ENCODE measurements at regions of chr17 and their contacts with region 1.

Region 1: GRCh38 chr17:41695954-41696756 is 7.5 kb downstream of the EIF1 start:
- DNase-seq: no peak
- ATAC-seq: peak; percentile 75
- H3K4me3 Mint-ChIP-seq: no peak overlapping the region
- H3K27ac Mint-ChIP-seq: peak overlapping the region; percentile 65
- H3K4me1 Mint-ChIP-seq: peaks cover 26% of the 10 kb centered on the region
- H3K27me3 Mint-ChIP-seq: no peaks in the 10 kb centered on the region
- CTCF ChIP-seq: peak; percentile 57

Region 2: DNA sequence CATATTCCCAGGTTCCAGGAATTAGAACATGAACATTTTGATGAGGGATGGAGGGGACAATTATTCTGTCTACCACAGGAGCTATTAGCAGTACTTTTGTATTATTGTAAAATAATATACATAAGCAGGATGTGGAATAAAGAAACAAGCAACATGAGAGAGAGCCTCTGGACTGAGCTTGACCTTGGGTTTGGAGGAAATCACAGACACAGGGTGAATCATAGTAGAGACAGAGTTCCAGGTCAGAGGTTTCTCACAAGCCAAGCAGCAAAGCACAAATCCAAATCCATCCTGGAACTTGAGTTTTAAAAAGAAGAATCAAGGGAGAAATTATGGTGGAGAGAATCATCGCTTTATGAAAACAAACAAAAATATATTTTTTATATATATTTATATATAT is 303.9 kb before region 1 on chr17:
- CTCF ChIA-PET with region 1: no interaction called
- POLR2A ChIA-PET with region 1: no interaction called
- intact Hi-C with region 1: no loop called
- DNase-seq: no peak
- ATAC-seq: no peak
- H3K4me3 Mint-ChIP-seq: no peak overlapping the region
- H3K27ac Mint-ChIP-seq: no peak overlapping the region
- H3K4me1 Mint-ChIP-seq: no peaks in the 10 kb centered on the region
- H3K27me3 Mint-ChIP-seq: peaks cover 52% of the 10 kb centered on the region
- CTCF ChIP-seq: no peak

Region 3: GRCh38 chr17:41464682-41465081 is 231.5 kb before region 1 on chr17:
- CTCF ChIA-PET with region 1: no interaction called
- POLR2A ChIA-PET with region 1: no interaction called
- intact Hi-C with region 1: no loop called
- DNase-seq: no peak
- ATAC-seq: no peak
- H3K4me3 Mint-ChIP-seq: no peak overlapping the region
- H3K27ac Mint-ChIP-seq: no peak overlapping the region
- H3K4me1 Mint-ChIP-seq: no peaks in the 10 kb centered on the region
- H3K27me3 Mint-ChIP-seq: peaks cover 28% of the 10 kb centered on the region
- CTCF ChIP-seq: no peak

Region 4: DNA sequence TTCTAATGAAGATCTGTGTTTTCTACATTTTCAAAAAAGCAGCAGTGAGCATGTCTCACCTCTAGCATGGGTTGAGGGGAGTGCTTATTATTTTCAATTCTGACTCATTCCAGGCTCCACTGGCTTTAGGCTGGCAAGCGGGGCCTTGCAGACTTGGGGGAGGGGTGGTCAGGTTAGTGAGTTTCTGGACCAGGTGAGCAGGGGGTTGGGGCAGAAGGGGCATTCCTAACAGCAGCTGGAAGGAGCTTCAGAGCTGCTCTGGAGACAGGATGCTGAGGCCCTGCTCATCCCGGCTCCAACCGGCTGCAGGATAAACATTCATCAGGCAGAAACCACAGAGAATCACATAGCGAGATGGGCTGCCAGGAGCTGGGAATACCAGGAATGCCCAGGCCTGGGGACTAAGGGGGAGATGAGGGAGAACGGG is 157.6 kb before region 1 on chr17:
- CTCF ChIA-PET with region 1: no interaction called
- POLR2A ChIA-PET with region 1: no interaction called
- intact Hi-C with region 1: no loop called
- DNase-seq: no peak
- ATAC-seq: no peak
- H3K4me3 Mint-ChIP-seq: no peak overlapping the region
- H3K27ac Mint-ChIP-seq: no peak overlapping the region
- H3K4me1 Mint-ChIP-seq: no peaks in the 10 kb centered on the region
- H3K27me3 Mint-ChIP-seq: peaks cover 38% of the 10 kb centered on the region
- CTCF ChIP-seq: no peak

Region 5: GRCh38 chr17:41678907-41679739 is 17.0 kb before region 1 on chr17:
- CTCF ChIA-PET with region 1: interaction called, 71 read pairs
- POLR2A ChIA-PET with region 1: interaction called, 421 read pairs
- intact Hi-C with region 1: no loop called
- DNase-seq: no peak
- ATAC-seq: peak; percentile 57
- H3K4me3 Mint-ChIP-seq: peak overlapping the region; percentile 80
- H3K27ac Mint-ChIP-seq: peak overlapping the region; percentile 91
- H3K4me1 Mint-ChIP-seq: peaks cover 45% of the 10 kb centered on the region
- H3K27me3 Mint-ChIP-seq: no peaks in the 10 kb centered on the region
- CTCF ChIP-seq: no peak

Measured in activated B cell treated with CpG ODN at 0.5 μM for 24 hours (primary cell).